Activated CD4-positive, alpha-beta T cell treated with anti-CD3 and anti-CD28 coated beads, Interleukin-2, amount 10 ng/mL, durations not matched to agents 24 days and 14 days (primary cell): ENCODE measurements at regions of chr17 and their contacts with region 1.

Region 1: DNA sequence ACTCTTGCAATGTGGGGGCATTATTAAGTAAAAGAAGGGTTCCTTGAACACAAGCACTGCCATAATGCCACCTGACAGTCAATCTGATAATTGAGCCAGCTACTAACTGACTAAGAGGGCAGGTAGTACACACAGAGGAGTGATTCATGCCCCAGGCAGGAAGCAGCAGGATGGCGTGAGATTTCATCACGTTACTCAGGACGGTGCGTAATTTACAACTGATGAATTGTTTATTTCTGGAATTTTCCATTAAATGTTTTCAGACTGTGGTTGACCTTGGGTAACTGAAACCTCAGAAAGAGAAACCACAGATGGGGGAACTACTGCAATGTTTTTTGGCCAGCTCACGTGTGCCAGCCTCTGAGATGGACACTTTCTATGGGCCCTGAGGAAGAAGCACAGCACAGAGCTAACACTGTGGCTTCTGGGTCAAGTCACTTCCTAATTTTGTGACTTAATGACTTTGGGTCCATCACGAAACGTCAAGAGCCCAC is 46.7 kb downstream of the C17orf67 start:
- DNase-seq: peak; percentile 82
- H3K4me3 Mint-ChIP-seq: peak overlapping the region; percentile 75
- H3K27ac Mint-ChIP-seq: peak overlapping the region; percentile 92
- H3K4me1 Mint-ChIP-seq: peaks cover 30% of the 10 kb centered on the region
- H3K27me3 Mint-ChIP-seq: peaks cover under 1% of the 10 kb centered on the region

Region 2: GRCh38 chr17:56543294-56543693 is 243.7 kb before region 1 on chr17:
- intact Hi-C with region 1: no loop called
- DNase-seq: no peak
- H3K4me3 Mint-ChIP-seq: no peak overlapping the region
- H3K27ac Mint-ChIP-seq: no peak overlapping the region
- H3K4me1 Mint-ChIP-seq: no peaks in the 10 kb centered on the region
- H3K27me3 Mint-ChIP-seq: no peaks in the 10 kb centered on the region

Region 3: DNA sequence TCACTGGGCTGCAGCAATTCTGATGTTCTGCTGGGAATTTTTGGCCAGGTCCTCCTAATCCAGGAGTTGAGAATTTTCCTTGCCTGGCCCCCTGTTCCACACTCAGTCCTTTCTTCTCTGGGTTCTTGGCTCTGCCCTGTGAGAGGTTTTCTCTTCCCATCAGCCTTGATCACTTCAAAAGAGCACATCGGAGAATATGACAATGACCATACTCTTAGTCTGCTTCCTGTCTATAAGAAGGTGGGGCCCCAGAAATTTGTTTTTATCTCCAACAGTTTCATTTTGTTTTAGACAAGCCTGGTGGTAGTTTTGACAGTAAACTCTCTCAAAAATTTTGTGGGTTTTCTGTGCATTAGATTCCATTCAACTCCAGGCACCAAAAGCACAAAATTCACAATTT is 24.0 kb before region 1 on chr17:
- intact Hi-C with region 1: loop called (anchors 2 kb)
- DNase-seq: peak; percentile 72
- H3K4me3 Mint-ChIP-seq: peak overlapping the region; percentile 54
- H3K27ac Mint-ChIP-seq: peak overlapping the region; percentile 87
- H3K4me1 Mint-ChIP-seq: peaks cover 14% of the 10 kb centered on the region
- H3K27me3 Mint-ChIP-seq: no peaks in the 10 kb centered on the region

Region 4: DNA sequence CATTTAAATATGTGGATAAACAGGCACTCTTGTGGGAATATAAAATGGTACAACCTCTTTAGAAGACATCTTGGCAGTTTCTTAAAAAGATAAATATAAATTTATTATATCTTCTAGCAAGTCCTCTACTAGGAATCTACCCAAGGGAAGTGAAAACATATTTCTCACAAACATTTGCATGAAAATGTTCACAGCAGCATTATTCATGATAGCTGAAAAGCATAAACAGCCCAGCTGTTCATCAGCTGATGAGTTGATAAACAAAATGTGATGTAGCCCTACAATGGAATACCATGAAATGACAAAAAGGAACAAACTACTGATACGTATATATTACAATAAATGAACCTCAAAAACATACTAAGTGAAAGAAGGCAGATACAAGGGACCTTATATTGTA is 58.9 kb after region 1 on chr17:
- intact Hi-C with region 1: no loop called
- DNase-seq: no peak
- H3K4me3 Mint-ChIP-seq: no peak overlapping the region
- H3K27ac Mint-ChIP-seq: no peak overlapping the region
- H3K4me1 Mint-ChIP-seq: no peaks in the 10 kb centered on the region
- H3K27me3 Mint-ChIP-seq: no peaks in the 10 kb centered on the region

Region 5: DNA sequence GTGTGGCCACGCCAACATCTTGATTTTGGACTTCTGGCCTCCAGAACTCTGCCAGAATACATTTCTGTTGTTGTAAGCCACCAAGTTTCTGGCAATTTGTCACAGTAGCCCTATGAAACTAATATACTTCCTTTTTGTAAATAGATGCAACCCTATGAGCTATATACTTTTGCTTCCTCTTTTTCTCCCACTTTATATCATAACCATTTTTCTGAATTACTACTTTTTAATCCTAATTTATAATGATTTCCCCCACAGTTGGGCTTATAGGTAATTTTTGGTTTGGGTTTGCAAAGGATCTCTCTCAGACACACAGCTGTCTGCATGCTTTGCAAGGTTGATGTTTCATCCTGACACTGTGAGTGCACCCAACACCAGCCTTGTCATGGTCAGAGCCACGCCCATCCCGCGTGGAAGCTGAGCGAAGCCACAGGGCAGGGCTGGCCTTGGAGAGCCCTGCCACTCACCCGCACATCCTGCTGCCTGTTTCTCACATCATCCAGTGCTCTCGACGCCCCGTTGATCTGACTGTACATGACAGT is 121.0 kb after region 1 on chr17:
- intact Hi-C with region 1: no loop called
- DNase-seq: peak; percentile 82
- H3K4me3 Mint-ChIP-seq: peak overlapping the region; percentile 97
- H3K27ac Mint-ChIP-seq: peak overlapping the region; percentile 36
- H3K4me1 Mint-ChIP-seq: peaks cover 61% of the 10 kb centered on the region
- H3K27me3 Mint-ChIP-seq: no peaks in the 10 kb centered on the region